ENCODE measurements at regions of chr15 and their contacts with region 1.

Region 1: DNA sequence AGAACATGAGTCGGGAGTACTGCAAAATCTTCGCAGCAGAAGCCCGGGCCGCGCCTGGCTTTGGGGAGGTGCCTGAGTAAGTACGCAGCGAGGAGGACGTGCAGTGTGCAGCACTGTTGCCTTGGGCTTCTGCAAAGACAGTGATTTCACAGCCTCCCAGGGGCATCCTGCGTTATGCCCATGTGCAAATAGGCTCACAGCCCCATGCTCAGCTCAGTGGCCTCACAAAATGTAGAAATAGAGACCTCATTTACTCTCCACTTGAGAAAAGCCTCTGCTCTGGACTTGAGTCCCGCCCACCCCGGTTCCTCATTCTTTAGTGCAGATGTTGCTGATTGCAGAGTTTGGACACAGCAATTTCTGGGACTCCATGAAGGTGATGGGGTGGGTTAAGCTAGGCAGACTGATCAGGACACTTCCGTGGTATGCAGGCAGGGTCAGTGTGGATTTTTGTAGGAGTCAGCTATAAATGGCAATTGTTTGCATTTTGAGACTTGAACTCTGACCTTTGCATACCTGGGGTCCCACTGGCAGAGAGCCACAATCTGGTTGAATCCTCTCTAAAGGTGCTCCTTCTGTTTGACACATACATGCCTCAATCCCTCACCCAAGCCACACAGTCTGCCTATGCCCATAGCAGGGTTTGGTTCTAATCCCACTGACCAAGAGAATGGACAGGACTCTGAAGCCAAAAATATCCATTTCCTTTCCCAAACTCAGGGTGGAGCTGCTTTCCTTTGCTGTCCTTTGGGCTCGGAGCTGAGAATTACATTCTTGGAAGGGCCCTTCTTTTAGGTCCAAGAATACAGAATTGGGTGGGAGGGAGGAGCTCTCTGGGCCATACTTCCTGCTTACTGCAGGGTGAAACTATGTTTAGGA is 20.7 kb upstream of the SLC28A1 start:
- DNase-seq: no peak
- H3K4me3 ChIP-seq: no peak overlapping the region
- H3K27ac ChIP-seq: peak overlapping the region; percentile 51 to 66
- H3K4me1 ChIP-seq: peaks cover 0 to 28% (median 24%) of the 10 kb centered on the region in 4 donors
- H3K27me3 ChIP-seq: no peaks in the 10 kb centered on the region
- CTCF ChIP-seq: peak; percentile 48 to 51

Region 2: DNA sequence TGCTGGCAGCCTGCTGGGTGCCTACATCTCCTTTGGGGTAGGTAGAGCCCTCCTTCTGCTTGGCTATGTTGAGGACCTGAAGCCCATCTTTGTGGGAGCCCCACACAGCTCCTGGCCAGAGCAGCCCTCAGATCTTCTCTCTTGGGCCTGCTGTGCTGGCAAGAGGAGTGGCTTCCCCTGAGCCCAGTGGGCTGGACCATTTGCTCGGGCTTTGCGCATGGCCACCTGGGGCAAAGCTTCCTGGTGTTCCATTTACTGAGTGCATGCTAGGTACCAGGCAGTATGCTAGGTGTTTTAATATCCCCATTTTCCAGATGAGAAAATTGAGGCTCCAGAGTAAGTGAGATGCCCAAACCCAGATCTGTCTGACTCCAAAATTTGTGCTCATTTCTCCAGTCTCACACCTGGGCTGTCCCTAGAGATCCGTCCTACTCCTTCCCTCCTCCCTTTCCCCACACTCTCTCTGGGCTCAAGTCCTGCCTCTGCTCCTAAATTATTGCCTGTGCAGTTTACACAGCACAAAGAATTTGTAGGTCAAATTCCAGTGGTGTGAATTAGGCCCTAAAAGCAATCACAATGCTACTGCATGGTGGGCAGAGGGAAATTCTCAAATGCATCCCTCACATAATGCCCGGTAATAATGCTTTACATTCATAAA is 60.4 kb after region 1 on chr15:
- intact Hi-C with region 1: loop called (anchors 2 kb)
- DNase-seq: no peak
- H3K4me3 ChIP-seq: no peak overlapping the region
- H3K27ac ChIP-seq: peak overlapping the region; percentile 35 to 81
- H3K4me1 ChIP-seq: peaks cover 0 to 37% (median 19%) of the 10 kb centered on the region in 4 donors
- H3K27me3 ChIP-seq: no peaks in the 10 kb centered on the region
- CTCF ChIP-seq: no peak

Measured in tibial artery (tissue), 4 donors.